ENCODE measurements at regions of chr1 and their contacts with region 1.

Region 1: DNA sequence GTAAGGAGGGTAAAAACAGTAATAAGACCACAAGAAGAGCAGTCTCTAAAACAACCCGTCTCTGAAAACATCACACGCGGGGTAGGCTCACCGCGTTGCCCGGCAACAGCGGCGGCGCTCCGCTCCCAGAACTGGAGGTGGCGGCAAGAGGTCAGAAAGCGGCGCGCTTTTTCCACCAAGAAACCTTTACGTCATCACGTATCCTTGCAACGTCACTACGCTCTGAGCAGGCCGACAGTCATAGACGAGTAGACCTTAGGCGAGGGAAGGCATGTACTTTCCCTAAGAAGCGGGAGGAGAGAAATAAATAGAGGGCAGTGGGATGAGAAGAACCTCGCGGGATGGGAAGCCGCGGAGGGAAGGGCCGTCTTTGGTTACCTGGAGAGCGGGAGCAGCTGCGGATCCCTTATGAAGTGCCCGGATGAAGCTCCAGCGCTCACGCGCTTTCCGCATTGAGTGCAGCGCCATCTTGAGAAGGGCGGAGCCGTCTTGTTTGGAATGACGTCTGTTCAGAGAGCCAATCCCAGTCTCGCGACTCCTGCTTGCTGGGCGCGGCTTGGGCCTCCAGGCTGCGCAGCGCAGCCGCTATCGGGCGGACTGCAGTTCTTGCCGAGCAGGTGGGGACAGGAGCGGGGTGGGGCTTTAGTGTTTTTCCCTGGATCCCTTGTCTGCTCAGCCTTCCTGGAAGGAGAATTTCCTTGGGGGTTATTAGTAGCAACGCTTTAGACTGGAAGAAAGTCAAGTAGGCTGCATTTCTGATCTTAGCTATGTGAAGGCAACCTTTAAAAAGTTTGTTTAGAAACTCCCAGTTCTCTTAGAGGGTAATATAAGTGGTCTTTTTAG is at the start of gene WARS2:
- DNase-seq: peak; percentile 95
- H3K4me3 Mint-ChIP-seq: no peak within 1 kb of the TSS
- H3K27ac Mint-ChIP-seq: no peak within 1 kb of the TSS
- H3K4me1 Mint-ChIP-seq: peaks cover 27% of the 10 kb centered on the region
- H3K27me3 Mint-ChIP-seq: no peaks in the 10 kb centered on the region
- total RNA-seq, gene WARS2: 28.3 to 30.0 TPM

Region 2: GRCh38 chr1:117367047-117368018 is 1773.1 kb before region 1 on chr1 and contains the start of gene MAN1A2:
- CTCF ChIA-PET with region 1: no interaction called
- intact Hi-C with region 1: loop called (anchors 5 kb)
- DNase-seq: peak; percentile 76
- H3K4me3 Mint-ChIP-seq: peak within 1 kb of the TSS; percentile 94
- H3K27ac Mint-ChIP-seq: peak within 1 kb of the TSS; percentile 94
- H3K4me1 Mint-ChIP-seq: peaks cover 48% of the 10 kb centered on the region
- H3K27me3 Mint-ChIP-seq: no peaks in the 10 kb centered on the region
- total RNA-seq, gene MAN1A2: 14.6 to 17.4 TPM

Region 3: GRCh38 chr1:117929173-117929989 is 1211.0 kb before region 1 on chr1 and contains the starts of genes GDAP2 and WDR3:
- CTCF ChIA-PET with region 1: no interaction called
- intact Hi-C with region 1: loop called (anchors 1 kb)
- DNase-seq: peak; percentile 97
- H3K4me3 Mint-ChIP-seq: peak within 1 kb of the TSS; percentile 96
- H3K27ac Mint-ChIP-seq: peak within 1 kb of the TSS; percentile 79
- H3K4me1 Mint-ChIP-seq: peaks cover 54% of the 10 kb centered on the region
- H3K27me3 Mint-ChIP-seq: no peaks in the 10 kb centered on the region
- total RNA-seq, gene GDAP2: 19.9 to 20.0 TPM
- total RNA-seq, gene WDR3: 45.2 to 49.6 TPM

Region 4: DNA sequence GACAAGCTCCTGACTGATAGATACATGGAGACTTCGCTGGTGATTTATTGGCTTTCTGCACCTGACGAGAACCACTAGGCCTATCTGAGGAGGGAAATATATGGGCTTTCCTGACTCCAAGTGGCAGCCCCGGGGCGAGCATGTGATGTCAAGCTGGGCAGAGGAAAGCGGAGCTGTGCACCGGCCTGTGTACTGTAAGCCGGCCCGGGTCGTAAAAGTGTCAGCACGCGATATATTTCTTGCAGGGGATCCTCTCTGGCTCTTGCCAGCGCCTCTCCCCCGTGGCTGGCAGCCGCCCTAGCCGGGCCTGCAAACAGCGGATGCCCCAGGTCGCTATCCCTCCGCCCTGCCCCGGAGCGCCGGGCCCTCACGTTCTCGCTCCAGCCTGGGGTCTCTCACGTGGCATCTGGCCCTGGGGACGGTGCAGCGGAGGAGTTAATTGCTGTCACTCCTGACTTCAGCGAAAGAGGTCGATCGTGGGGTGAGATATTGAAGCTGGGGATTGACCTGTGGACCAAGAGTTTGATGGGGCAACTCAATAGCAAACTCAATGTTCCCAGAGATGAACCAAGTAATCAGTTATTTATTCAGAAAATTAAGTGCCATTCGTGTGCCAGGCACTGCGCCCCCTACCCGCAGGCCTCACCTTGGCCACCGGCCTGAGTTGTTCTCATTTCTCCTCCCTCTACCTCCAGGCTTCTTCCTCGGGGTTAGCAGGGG is 187.2 kb after region 1 on chr1:
- CTCF ChIA-PET with region 1: no interaction called
- intact Hi-C with region 1: loop called (anchors 5 kb)
- DNase-seq: peak; percentile 48
- H3K4me3 Mint-ChIP-seq: peak overlapping the region; percentile 72
- H3K27ac Mint-ChIP-seq: no peak overlapping the region
- H3K4me1 Mint-ChIP-seq: peaks cover 10% of the 10 kb centered on the region
- H3K27me3 Mint-ChIP-seq: peaks cover 14% of the 10 kb centered on the region

Region 5: DNA sequence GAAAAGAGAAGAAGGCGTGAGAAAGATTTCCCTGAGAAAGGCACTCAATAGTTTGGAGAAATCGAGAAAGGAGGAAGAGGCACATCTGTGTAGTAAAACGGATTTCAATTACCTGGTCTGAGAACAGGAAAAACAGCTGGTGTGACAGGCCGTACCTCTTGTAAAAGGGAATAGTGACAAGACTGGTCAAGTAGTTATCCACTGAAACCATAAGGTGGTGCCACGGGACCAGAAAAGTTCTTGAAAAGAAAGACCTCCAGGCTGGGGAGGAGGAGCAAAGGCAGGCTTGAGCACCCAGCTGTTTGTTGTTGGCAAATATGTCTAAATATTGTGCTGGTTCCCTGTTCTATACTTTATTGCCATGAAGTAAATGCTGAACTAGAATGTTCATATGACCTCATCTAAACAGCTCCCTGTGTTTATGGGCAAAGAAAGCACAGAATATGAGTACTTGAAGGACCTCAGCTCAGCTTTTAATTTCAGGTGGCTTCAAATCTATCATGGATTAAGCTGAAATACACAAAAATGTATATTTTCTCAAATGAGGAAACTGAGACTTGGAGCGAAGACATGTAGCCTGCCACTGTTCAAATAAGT is 232.2 kb after region 1 on chr1:
- CTCF ChIA-PET with region 1: no interaction called
- intact Hi-C with region 1: loop called (anchors 5 kb)
- DNase-seq: peak; percentile 10
- H3K4me3 Mint-ChIP-seq: no peak overlapping the region
- H3K27ac Mint-ChIP-seq: no peak overlapping the region
- H3K4me1 Mint-ChIP-seq: peaks cover 14% of the 10 kb centered on the region
- H3K27me3 Mint-ChIP-seq: peaks cover 20% of the 10 kb centered on the region

Region 6: DNA sequence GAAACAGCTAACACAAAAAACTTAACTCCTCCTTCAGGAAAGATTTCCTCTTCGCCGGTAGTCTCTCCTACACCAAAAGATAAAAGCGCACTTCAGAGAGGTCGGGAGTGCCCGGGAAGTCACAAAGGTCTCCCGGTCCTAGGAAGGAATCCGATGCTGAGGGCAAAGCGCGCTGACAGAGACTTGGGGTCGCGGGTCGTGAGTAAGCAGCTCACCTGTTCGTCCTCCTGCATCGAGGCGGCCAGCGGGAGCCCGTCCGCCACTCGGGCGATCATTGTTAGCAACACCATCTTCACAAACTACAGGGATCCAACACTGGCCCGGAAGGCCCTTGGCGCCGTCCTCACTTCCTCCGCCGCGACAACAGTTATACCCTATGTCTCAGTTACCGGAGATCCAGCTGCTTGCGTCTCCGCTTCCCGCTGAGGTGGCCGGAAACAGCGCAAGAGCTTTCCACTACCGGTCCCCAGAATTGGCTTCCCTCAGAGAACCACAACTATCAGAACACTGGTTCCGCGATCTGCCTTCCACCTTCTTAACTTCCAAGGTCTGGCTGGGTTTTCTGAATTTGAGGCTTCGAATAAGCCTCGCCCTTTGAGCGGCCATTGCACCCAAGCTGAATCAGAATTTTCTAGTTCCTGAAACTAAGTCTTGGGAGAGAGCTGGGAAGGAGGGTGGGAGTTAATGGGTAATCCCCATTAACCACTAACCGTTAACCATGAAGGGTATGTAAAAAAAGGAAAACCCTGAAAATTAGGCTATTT is 1035.9 kb after region 1 on chr1 and contains the start of gene SEC22B:
- CTCF ChIA-PET with region 1: no interaction called
- intact Hi-C with region 1: loop called (anchors 5 kb)
- DNase-seq: peak; percentile 94
- H3K4me3 Mint-ChIP-seq: peak within 1 kb of the TSS; percentile 96
- H3K27ac Mint-ChIP-seq: peak within 1 kb of the TSS; percentile 98
- H3K4me1 Mint-ChIP-seq: peaks cover 20% of the 10 kb centered on the region
- H3K27me3 Mint-ChIP-seq: no peaks in the 10 kb centered on the region
- total RNA-seq, gene SEC22B: 24.1 to 24.8 TPM

Measured in activated naive CD4-positive, alpha-beta T cell treated with anti-CD3 and anti-CD28 coated beads for 36 hours (primary cell).